ENCODE measurements at regions of chr13 and their contacts with region 1.

Region 1: GRCh38 chr13:77113496-77113895 is 86.5 kb upstream of the FBXL3 start:
- DNase-seq: no peak
- H3K4me3 ChIP-seq: no peak overlapping the region
- H3K27ac ChIP-seq: no peak overlapping the region
- H3K4me1 ChIP-seq: no peaks in the 10 kb centered on the region
- H3K27me3 ChIP-seq: no peaks in the 10 kb centered on the region
- CTCF ChIP-seq: no peak
- POLR2A ChIP-seq: no peak

Region 2: GRCh38 chr13:77056382-77056781 is 57.1 kb before region 1 on chr13:
- CTCF ChIA-PET with region 1: no interaction called
- POLR2A ChIA-PET with region 1: no interaction called
- dilution Hi-C with region 1: no loop called
- intact Hi-C with region 1: no loop called
- DNase-seq: no peak
- H3K4me3 ChIP-seq: no peak overlapping the region
- H3K27ac ChIP-seq: no peak overlapping the region
- H3K4me1 ChIP-seq: no peaks in the 10 kb centered on the region
- H3K27me3 ChIP-seq: no peaks in the 10 kb centered on the region
- CTCF ChIP-seq: no peak
- POLR2A ChIP-seq: no peak

Region 3: DNA sequence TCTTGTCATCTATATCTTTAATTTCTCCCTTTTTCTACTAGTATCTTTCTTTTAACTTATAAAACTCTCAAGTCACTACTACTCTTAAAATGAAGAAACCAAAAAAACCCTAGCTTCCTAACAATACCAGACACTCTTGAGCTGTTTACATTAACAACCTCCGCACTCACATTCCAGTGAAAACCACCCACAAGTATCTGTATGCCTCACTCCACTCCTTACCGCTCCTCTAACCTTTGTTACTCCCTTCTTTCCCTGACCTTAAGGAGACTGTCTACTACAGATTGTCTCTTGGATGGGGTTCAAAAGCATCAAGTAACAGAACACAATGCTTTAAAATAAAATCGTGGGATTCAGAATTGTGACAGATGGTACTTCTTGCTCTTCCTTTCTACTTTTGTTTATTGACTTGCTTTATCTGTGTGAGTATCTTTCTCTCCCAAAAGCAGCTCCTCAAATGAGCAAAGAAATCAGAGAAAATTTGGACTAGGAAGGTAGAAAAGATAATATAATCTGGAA is 23.5 kb after region 1 on chr13:
- CTCF ChIA-PET with region 1: interaction called, 29 read pairs
- POLR2A ChIA-PET with region 1: no interaction called
- dilution Hi-C with region 1: no loop called
- intact Hi-C with region 1: no loop called
- DNase-seq: no peak
- H3K4me3 ChIP-seq: no peak overlapping the region
- H3K27ac ChIP-seq: no peak overlapping the region
- H3K4me1 ChIP-seq: no peaks in the 10 kb centered on the region
- H3K27me3 ChIP-seq: no peaks in the 10 kb centered on the region
- CTCF ChIP-seq: no peak
- POLR2A ChIP-seq: no peak